Mammary epithelial cell (primary cell): ENCODE measurements at regions of chr17 and their contacts with region 1.

Region 1: GRCh38 chr17:65198653-65199382 is 61.6 kb downstream of the RGS9 start:
- DNase-seq: peak; percentile 35
- H3K4me3 ChIP-seq: no peak overlapping the region
- H3K27ac ChIP-seq: no peak overlapping the region
- H3K4me1 ChIP-seq: peaks cover 10% of the 10 kb centered on the region
- H3K27me3 ChIP-seq: no peaks in the 10 kb centered on the region
- CTCF ChIP-seq: peak; percentile 64 to 70

Region 2: DNA sequence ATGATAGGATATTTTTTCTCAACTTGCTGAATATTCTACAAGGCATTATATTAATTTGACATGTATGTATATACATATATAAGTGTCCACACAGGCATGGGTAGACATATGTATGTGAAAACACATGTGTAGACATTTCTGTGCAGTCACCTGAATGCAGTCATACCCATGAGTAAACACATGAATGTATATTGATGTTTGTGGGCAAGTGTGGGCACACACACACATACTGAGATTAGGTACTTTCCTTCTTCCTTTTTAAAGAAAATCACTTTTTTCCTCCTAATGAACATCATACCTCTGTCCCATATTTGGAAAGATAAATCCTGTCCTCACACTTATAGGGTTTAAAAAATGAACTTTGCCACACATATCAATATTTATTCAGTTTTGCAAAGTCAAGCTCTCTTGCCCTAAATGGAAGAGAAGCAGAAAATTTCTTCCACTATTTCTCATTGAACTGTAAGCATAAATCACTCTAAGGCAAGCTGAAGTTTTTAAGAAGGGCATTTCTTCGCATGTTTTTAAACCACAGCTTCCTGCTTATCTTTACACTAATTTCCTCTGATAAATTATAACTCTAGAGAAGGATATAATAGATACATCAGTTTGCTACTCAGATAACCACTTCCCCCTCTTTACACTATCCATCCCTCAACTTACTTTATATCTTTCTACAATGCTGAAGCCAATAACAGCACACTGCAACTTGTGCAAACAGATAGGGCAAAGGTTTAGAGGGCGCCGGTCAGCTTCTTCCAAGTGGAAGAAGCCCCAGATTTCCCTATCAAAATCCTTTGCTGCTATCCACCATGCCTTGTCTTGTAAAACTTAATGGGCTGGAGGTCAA is 229.9 kb before region 1 on chr17:
- CTCF ChIA-PET with region 1: interaction called, 5 read pairs
- dilution Hi-C with region 1: loop called (anchors 10 kb)
- in situ Hi-C with region 1: loop called in 1 of 2 experiments (anchors 10 kb)
- intact Hi-C with region 1: no loop called
- DNase-seq: no peak
- H3K4me3 ChIP-seq: no peak overlapping the region
- H3K27ac ChIP-seq: no peak overlapping the region
- H3K4me1 ChIP-seq: peaks cover 3% of the 10 kb centered on the region
- H3K27me3 ChIP-seq: no peaks in the 10 kb centered on the region
- CTCF ChIP-seq: no peak

Region 3: GRCh38 chr17:65027305-65027704 is 171.5 kb before region 1 on chr17:
- CTCF ChIA-PET with region 1: no interaction called
- dilution Hi-C with region 1: no loop called
- in situ Hi-C with region 1: no loop called
- intact Hi-C with region 1: loop called (anchors 10 kb)
- DNase-seq: peak; percentile 74
- H3K4me3 ChIP-seq: no peak overlapping the region
- H3K27ac ChIP-seq: peak overlapping the region; percentile 51
- H3K4me1 ChIP-seq: peaks cover 20% of the 10 kb centered on the region
- H3K27me3 ChIP-seq: no peaks in the 10 kb centered on the region
- CTCF ChIP-seq: peak; percentile 30 to 36

Region 4: DNA sequence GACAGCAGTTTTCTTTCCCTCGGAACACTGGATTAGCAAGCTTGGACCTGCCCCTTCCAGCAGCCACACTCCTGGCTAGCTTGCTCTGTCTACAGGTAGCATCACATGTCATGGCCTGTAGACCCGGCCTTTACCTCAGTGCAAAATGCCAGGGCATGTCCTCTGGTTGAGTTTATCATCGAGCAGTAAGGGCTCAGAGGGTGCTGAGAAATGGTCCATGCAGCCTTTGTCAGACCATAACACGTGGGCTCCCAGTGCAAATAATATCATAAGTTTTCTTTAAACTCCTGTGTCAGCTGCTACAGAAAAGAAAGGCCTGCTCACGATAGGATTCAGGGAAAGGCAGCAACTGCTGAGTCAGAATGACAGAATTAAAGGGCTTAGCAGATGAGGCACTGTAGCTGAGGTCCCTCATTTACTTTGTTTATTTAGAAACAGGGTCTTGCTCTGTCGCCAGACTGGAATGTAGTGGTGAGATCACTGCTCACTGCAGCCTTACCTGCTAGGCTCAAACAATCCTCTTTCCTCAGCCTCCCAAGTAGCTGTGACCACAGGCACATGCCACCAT is 134.3 kb before region 1 on chr17:
- CTCF ChIA-PET with region 1: no interaction called
- dilution Hi-C with region 1: no loop called
- in situ Hi-C with region 1: no loop called
- intact Hi-C with region 1: loop called (anchors 1 kb)
- DNase-seq: peak; percentile 96
- H3K4me3 ChIP-seq: peak overlapping the region in 1 of 3 experiments; percentile 14
- H3K27ac ChIP-seq: peak overlapping the region; percentile 62
- H3K4me1 ChIP-seq: peaks cover 45% of the 10 kb centered on the region
- H3K27me3 ChIP-seq: no peaks in the 10 kb centered on the region
- CTCF ChIP-seq: no peak

Region 5: DNA sequence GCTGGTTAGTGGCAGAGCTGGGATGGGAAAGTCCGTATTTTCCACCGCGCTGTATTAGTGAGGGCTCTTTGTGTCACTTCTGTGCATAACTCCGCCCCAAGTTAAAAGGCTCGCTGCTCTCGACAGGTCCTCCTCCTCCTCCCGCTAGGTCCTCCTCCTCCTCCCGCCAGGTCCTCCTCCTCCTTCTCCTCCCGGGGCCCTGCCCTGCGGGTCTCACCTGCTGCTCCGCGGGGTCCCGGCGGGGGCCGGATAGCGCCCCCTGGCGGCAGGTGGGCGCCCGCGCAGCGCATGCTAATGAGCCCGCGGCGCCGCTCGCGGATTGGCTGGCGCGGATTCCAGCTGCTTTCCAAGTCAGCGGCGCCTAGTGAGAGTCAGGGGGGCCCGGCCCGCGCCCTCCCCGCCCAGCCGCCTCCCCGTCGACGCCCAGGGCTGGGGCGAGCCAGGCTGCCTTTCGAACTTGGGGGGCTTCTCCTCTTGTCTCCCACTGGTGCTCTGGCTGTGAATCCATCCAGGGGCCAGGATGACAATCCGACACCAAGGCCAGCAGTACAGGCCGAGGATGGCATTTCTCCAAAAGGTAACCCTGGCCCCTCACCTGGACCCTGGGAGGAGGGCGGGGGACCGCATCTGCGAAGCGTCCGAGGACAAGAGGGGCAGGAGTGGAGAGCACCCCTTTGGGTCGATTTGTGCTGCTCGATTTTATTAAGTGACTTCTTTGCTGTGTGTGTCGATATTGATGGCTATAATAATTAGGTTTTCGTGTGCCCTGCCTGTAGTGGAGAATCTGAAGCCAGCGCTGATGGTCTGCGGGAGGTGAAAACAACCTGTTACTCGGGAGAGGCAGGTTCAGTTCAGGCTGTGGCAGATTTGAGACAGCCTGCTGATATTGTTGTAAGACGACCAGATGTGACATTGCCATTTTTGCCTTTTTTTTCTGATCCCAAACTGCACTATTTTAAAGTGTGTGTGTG is 61.5 kb before region 1 on chr17 and contains the start of gene RGS9:
- CTCF ChIA-PET with region 1: interaction called, 7 read pairs
- dilution Hi-C with region 1: no loop called
- in situ Hi-C with region 1: no loop called
- intact Hi-C with region 1: loop called (anchors 2 kb)
- DNase-seq: peak; percentile 65
- H3K4me3 ChIP-seq: peak within 1 kb of the TSS; percentile 38 to 49 (median 40)
- H3K27ac ChIP-seq: no peak within 1 kb of the TSS
- H3K4me1 ChIP-seq: peaks cover 4% of the 10 kb centered on the region
- H3K27me3 ChIP-seq: no peaks in the 10 kb centered on the region
- CTCF ChIP-seq: peak; percentile 58 to 93
- total RNA-seq, gene RGS9: 2.8 to 3.5 TPM

Region 6: DNA sequence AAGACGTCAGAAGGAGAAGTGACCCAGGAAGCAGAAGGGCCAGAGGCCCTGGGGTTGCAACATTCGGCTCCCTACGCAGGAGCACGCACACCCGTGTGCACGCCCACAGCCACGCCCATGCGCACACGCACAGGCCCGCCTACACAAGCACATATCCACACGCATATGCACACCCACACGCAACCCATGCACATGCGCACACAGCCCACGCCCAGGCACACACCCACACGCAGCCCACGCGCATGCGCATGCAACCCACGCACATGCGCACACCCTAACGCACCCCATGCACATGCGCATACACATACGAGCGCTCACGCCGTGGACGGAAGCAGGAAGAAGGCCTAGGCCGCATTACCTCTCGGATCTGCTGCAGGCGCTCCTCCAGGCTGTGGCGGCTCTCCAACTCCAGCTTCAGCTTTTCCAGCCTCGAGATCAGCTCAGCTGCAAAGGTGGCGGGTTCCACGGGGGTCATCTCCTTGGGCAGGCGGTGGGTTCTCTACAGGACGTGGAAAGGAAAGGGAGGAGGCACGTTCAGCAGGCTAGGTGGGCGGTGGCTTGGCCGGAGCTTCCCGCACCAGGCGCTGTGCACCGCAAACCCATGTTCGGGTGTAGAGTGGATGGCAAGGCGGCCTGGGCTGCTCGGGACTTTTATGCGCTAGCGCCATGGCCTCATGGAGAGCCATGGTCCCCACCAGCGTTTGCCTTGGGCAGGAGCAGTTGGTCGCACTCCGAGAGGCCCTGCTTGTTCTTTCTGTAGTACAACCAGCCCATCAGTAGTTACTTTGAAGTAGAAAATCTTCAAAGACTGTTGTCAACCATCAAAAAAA is 339.2 kb after region 1 on chr17:
- CTCF ChIA-PET with region 1: no interaction called
- dilution Hi-C with region 1: no loop called
- in situ Hi-C with region 1: no loop called
- intact Hi-C with region 1: no loop called
- DNase-seq: no peak
- H3K4me3 ChIP-seq: no peak overlapping the region
- H3K27ac ChIP-seq: no peak overlapping the region
- H3K4me1 ChIP-seq: no peaks in the 10 kb centered on the region
- H3K27me3 ChIP-seq: no peaks in the 10 kb centered on the region
- CTCF ChIP-seq: no peak